Activated CD4-positive, alpha-beta memory T cell treated with anti-CD3 and anti-CD28 coated beads, Interleukin-2, amount 10 ng/mL, durations not matched to agents 7 days and 5 days (primary cell): ENCODE measurements at regions of chr1 and their contacts with region 1.

Region 1: DNA sequence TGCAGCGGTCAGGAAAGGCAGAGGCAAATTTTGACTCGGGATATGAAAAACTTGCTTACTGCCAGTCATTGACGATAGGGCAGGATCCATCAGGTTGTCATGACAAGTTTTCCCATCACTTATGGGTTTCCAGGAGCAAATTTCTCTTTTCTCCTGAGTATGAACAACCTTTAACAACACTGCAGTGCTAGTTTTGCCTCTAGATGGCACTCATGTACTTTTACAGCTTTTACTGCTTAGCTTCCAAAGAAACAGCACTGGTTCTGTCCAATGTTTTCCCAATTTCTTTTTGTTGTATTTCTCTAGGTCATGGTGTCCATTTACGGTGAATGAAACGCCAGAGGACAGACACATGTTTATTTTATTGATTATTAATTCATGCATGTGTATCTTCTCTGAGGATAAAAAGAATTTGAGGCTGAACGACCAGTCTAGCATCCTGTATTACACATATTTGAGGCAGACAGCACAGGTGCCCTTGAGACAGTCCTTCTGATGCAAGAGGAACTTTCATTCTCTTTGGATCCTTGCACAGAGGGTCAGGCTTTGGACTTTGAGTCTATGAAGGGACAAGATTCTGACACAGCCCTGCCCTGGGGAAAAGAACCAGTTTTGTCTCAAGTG is 112.3 kb upstream of the TRABD2B start:
- DNase-seq: no peak
- H3K4me3 Mint-ChIP-seq: no peak overlapping the region
- H3K27ac Mint-ChIP-seq: no peak overlapping the region
- H3K4me1 Mint-ChIP-seq: no peaks in the 10 kb centered on the region
- H3K27me3 Mint-ChIP-seq: peaks cover 9% of the 10 kb centered on the region

Region 2: GRCh38 chr1:48175116-48175515 is 65.6 kb after region 1 on chr1:
- CTCF ChIA-PET with region 1: no interaction called
- POLR2A ChIA-PET with region 1: no interaction called
- DNase-seq: no peak
- H3K4me3 Mint-ChIP-seq: no peak overlapping the region
- H3K27ac Mint-ChIP-seq: no peak overlapping the region
- H3K4me1 Mint-ChIP-seq: no peaks in the 10 kb centered on the region
- H3K27me3 Mint-ChIP-seq: peaks cover 9% of the 10 kb centered on the region

Region 3: GRCh38 chr1:48202030-48202752 is 92.7 kb after region 1 on chr1:
- CTCF ChIA-PET with region 1: interaction called, 27 read pairs
- POLR2A ChIA-PET with region 1: no interaction called
- DNase-seq: peak; percentile 59
- H3K4me3 Mint-ChIP-seq: no peak overlapping the region
- H3K27ac Mint-ChIP-seq: no peak overlapping the region
- H3K4me1 Mint-ChIP-seq: no peaks in the 10 kb centered on the region
- H3K27me3 Mint-ChIP-seq: peaks cover 2% of the 10 kb centered on the region